ENCODE measurements at regions of chr14 and their contacts with region 1.

Region 1: DNA sequence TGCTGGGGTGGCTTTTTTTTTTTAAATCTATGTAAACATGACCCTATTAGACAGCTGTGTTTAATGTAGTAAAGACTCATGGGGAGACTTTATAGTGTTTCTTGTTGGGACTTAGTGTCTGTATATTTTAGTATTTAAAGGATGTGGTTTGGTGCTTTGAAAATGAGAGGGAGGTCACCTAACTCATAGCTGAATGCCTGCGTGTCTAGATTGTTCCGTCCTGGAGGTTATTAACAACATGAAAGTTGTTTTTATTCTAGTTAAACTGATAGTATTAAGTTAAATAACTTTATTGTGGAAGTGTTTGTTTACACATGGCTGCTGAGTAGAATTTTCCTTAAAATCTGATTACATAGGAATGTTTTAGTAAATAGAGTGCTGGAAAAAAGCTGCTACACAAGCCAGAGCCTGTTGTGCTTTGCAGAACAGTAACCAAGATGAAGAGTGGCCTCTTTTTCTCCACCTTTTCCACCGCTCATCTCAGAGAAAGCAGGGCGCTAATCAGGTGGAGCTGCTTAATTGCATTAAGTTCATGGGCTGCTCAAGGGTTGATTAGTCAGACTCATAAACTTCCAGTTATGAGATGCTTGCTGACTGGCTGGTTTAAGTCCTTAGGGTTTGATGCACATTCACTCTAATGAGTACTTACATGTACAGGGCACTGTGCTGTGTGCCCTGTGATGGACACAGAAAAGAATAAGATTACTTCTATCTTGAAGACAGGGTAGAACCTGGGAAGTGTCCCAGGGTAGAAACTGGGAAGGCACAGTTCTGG is 62.7 kb downstream of the FBXO34 start:
- DNase-seq: no peak
- ATAC-seq: peak; percentile 81
- H3K4me3 ChIP-seq: no peak overlapping the region
- H3K27ac ChIP-seq: peak overlapping the region; percentile 71; the same call in 1 of the 2 replicates
- H3K4me1 ChIP-seq: peaks cover 26% of the 10 kb centered on the region
- H3K27me3 ChIP-seq: no peaks in the 10 kb centered on the region
- CTCF ChIP-seq: no peak
- EP300 ChIP-seq: no peak
- POLR2A ChIP-seq: no peak
- RAD21 ChIP-seq: no peak

Region 2: DNA sequence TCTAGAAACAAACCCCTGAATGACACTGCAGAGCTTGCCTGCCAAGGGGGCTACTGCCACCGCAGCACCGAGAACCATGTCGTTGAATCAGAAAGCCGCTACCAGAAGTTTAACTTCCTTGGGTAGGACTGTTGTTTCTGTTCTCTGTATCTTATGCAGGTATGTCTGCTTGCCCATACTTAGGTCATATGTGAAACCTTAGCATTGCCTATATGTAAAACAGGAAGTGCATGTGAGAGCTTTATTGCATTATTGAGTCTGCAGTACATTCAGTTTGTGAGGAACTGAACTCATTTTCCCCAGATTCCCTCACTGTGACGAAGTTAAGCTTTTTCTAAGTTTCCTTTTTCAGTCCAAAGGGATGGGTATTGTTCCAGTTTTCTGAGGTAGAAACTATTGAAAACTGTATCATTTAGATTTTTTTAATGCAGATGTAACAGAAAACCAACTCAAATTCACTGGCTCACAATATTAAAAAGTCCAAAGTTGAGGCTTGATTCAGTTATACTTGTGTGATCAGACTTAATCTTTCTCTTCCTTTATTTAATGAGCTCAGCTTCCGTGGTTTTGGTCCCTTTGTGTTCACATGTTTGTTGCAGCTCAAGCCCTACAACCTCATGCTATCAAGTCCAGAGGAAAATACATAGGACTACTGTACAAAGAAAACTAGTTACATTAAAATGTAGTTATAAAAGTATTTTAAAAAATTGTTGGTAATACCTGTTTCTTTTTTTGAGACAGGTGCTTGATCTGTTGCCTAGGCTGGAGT is 55.7 kb before region 1 on chr14:
- CTCF ChIA-PET with region 1: interaction called, 14 read pairs
- POLR2A ChIA-PET with region 1: interaction called, 5 read pairs
- RAD21 ChIA-PET with region 1: interaction called, 20 read pairs
- SMC1A ChIA-PET with region 1: interaction called, 18 read pairs
- in situ Hi-C with region 1: no loop called
- intact Hi-C with region 1: loop called (anchors 2 kb)
- DNase-seq: no peak
- ATAC-seq: peak; percentile 84
- H3K4me3 ChIP-seq: peak overlapping the region; percentile 38; the same call in 1 of the 2 replicates
- H3K27ac ChIP-seq: peak overlapping the region; percentile 84
- H3K4me1 ChIP-seq: peaks cover 46% of the 10 kb centered on the region
- H3K27me3 ChIP-seq: no peaks in the 10 kb centered on the region
- CTCF ChIP-seq: no peak
- EP300 ChIP-seq: no peak
- POLR2A ChIP-seq: no peak
- RAD21 ChIP-seq: no peak

Region 3: GRCh38 chr14:55301437-55302121 is 32.3 kb before region 1 on chr14:
- CTCF ChIA-PET with region 1: interaction called, 3 read pairs
- POLR2A ChIA-PET with region 1: no interaction called
- RAD21 ChIA-PET with region 1: no interaction called
- SMC1A ChIA-PET with region 1: interaction called, 10 read pairs
- in situ Hi-C with region 1: no loop called
- intact Hi-C with region 1: no loop called
- DNase-seq: no peak
- ATAC-seq: peak; percentile 71
- H3K4me3 ChIP-seq: no peak overlapping the region
- H3K27ac ChIP-seq: no peak overlapping the region; the same call in 1 of the 2 replicates
- H3K4me1 ChIP-seq: peaks cover 43% of the 10 kb centered on the region
- H3K27me3 ChIP-seq: no peaks in the 10 kb centered on the region
- CTCF ChIP-seq: no peak
- EP300 ChIP-seq: no peak
- POLR2A ChIP-seq: no peak
- RAD21 ChIP-seq: no peak

Region 4: GRCh38 chr14:55348766-55349453 is 15.0 kb after region 1 on chr14:
- CTCF ChIA-PET with region 1: interaction called, 7 read pairs
- POLR2A ChIA-PET with region 1: interaction called, 5 read pairs
- RAD21 ChIA-PET with region 1: interaction called, 23 read pairs
- SMC1A ChIA-PET with region 1: interaction called, 41 read pairs
- in situ Hi-C with region 1: no loop called
- intact Hi-C with region 1: no loop called
- DNase-seq: no peak
- ATAC-seq: peak; percentile 83
- H3K4me3 ChIP-seq: no peak overlapping the region
- H3K27ac ChIP-seq: peak overlapping the region; percentile 38
- H3K4me1 ChIP-seq: peaks cover 11% of the 10 kb centered on the region
- H3K27me3 ChIP-seq: no peaks in the 10 kb centered on the region
- CTCF ChIP-seq: no peak
- EP300 ChIP-seq: no peak
- POLR2A ChIP-seq: no peak
- RAD21 ChIP-seq: no peak